ENCODE measurements at regions of chr5 and their contacts with region 1.

Region 1: GRCh38 chr5:175501759-175502339 is 23.5 kb downstream of the SFXN1 start:
- DNase-seq: peak in 1 of 9 experiments; percentile 23
- ATAC-seq: no peak
- H3K4me3 ChIP-seq: no peak overlapping the region
- H3K4me3 Mint-ChIP-seq: no peak overlapping the region
- H3K27ac ChIP-seq: no peak overlapping the region
- H3K27ac Mint-ChIP-seq: peak overlapping the region; percentile 64
- H3K4me1 ChIP-seq: peaks cover 2% of the 10 kb centered on the region
- H3K4me1 Mint-ChIP-seq: peaks cover 39% of the 10 kb centered on the region
- H3K27me3 ChIP-seq: no peaks in the 10 kb centered on the region
- H3K27me3 Mint-ChIP-seq: no peaks in the 10 kb centered on the region
- CTCF ChIP-seq: no peak

Region 2: GRCh38 chr5:175478384-175479124 is 23.3 kb before region 1 on chr5 and contains the start of gene SFXN1:
- CTCF ChIA-PET with region 1: interaction called, 3 read pairs
- POLR2A ChIA-PET with region 1: interaction called, 3 read pairs
- intact Hi-C with region 1: loop called in 1 of 2 experiments (anchors 2 kb)
- DNase-seq: peak; percentile 43 to 89 (median 75)
- ATAC-seq: peak; percentile 32
- H3K4me3 ChIP-seq: peak within 1 kb of the TSS; percentile 74 to 80
- H3K4me3 Mint-ChIP-seq: peak within 1 kb of the TSS; percentile 96
- H3K27ac ChIP-seq: peak within 1 kb of the TSS; percentile 67 to 75
- H3K27ac Mint-ChIP-seq: peak within 1 kb of the TSS; percentile 97
- H3K4me1 ChIP-seq: peaks cover 48% of the 10 kb centered on the region
- H3K4me1 Mint-ChIP-seq: peaks cover 49% of the 10 kb centered on the region
- H3K27me3 ChIP-seq: no peaks in the 10 kb centered on the region
- H3K27me3 Mint-ChIP-seq: no peaks in the 10 kb centered on the region
- CTCF ChIP-seq: no peak
- total RNA-seq, gene SFXN1: 169 to 174 TPM

Region 3: DNA sequence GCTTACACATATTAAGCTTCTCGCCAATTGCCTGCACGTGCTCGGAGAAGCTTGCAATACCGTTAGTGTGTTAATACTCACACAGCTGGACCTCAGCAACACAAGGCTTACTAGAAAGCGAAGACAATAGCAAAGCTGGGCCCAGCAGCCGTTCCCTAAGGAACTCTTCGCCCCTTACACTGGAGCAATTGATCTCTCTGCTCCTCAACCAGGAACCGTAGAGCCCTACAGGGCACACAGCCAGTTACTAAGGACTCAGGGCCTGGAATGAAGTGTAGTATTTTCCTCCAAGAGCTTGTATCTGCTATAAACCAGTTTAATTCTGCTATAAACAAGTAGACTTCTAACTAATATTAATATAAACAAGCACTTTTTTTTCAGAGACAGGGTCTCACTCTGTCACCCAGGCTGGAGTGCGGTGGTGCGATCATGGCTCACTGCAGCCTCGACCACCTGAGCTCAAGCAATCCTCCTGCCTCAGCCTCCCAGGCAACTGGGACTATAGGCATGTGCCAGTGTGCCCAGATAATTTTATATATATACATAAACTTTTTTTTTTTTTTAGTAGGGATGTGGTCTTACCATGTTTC is 669.4 kb after region 1 on chr5:
- CTCF ChIA-PET with region 1: no interaction called
- POLR2A ChIA-PET with region 1: no interaction called
- intact Hi-C with region 1: no loop called
- DNase-seq: no peak
- ATAC-seq: no peak
- H3K4me3 ChIP-seq: no peak overlapping the region
- H3K4me3 Mint-ChIP-seq: no peak overlapping the region
- H3K27ac ChIP-seq: no peak overlapping the region
- H3K27ac Mint-ChIP-seq: no peak overlapping the region
- H3K4me1 ChIP-seq: no peaks in the 10 kb centered on the region
- H3K4me1 Mint-ChIP-seq: no peaks in the 10 kb centered on the region
- H3K27me3 ChIP-seq: no peaks in the 10 kb centered on the region
- H3K27me3 Mint-ChIP-seq: peaks cover 30% of the 10 kb centered on the region
- CTCF ChIP-seq: no peak

Measured in CD8-positive, alpha-beta T cell (primary cell).